Natural killer cell (primary cell): ENCODE measurements at regions of chr15 and their contacts with region 1.

Region 1: DNA sequence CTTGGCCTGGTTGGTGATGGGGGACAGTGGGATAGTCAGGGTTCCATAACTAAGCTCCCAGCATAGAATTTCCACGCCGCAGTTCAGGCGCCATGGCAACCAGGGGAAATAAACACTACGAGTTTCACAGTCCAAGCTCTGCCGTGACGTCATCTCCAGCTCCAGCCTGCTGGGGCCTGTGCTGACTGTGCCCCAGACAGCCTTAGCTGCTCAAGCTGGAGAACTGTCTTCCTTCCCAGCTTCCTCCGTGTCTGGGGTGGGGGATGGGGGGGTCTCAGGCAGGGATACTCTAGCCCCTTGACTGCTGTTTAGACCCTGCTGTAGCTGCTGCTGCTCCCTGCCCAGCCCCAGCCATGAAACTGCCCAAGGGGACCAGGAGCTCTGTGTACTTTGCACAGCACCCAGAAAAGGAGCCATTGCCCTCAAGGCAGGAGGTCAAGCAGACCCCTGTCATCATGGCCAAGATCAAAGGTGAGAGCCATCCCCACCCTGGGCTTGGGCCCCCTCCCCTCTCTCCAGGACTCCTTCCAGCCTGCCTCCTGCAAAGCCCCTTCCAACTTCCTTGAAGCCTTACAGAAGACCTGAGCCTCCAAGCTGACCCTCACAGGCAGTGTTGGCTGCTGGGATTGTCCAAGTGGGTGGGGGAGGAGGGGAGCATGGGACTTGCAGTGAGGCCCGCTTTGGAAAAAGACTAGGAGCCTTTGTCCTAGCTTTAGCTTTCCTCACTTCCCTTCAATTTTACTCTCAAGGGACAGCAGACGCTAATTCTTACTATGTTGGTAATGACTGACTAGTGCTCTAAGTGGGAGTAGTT is 11.4 kb upstream of the CSPG4 start:
- DNase-seq: peak in 1 of 2 donors; percentile 59
- ATAC-seq: peak; percentile 33 to 52 (median 41)
- H3K4me3 ChIP-seq: no peak overlapping the region
- H3K4me3 Mint-ChIP-seq: no peak overlapping the region
- H3K27ac ChIP-seq: no peak overlapping the region
- H3K27ac Mint-ChIP-seq: no peak overlapping the region
- H3K4me1 ChIP-seq: peaks cover 4% of the 10 kb centered on the region
- H3K4me1 Mint-ChIP-seq: peaks cover 6 to 19% of the 10 kb centered on the region in 2 donors
- H3K27me3 ChIP-seq: no peaks in the 10 kb centered on the region
- H3K27me3 Mint-ChIP-seq: peaks cover 9 to 30% of the 10 kb centered on the region in 2 donors
- CTCF ChIP-seq: no peak

Region 2: DNA sequence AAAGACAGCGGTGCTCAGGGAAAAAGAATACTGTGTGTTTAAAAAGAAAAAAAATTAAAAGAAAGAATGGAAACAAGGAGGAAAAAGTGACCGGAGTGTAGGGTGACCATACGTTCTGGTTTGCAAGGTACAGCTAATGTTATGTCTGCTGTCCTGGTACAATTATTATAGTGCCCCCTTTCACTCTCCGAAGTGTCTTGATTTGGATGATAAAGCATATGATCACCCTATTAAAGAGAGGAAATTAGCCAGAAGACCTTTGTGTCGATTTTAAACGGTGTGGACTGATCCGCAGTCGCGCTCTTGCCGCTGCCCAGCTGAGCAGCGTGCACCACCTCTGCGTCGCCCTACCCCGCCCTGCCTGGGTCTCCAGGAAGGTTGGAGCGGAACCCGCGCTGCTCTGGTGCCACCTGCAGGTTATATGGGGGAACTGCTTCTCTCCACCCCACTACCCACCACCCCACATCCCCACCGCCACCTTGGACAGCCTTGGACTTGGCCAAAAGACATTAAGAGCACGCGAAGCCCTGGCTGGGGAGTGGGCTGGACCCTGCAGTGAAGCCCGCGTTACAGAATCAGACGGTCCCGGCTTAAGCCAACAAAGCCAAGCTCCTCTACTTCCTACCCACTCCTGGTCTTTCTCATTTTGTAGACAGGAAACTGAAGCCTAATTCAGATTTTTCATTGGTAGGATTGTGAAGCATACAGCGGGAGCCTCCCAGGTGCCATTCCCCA is 78.0 kb after region 1 on chr15:
- intact Hi-C with region 1: loop called (anchors 1 kb)
- DNase-seq: peak; percentile 73 to 88
- ATAC-seq: peak; percentile 99 to 100 (median 100)
- H3K4me3 ChIP-seq: no peak overlapping the region
- H3K4me3 Mint-ChIP-seq: no peak overlapping the region
- H3K27ac ChIP-seq: no peak overlapping the region
- H3K27ac Mint-ChIP-seq: no peak overlapping the region
- H3K4me1 ChIP-seq: peaks cover 7% of the 10 kb centered on the region
- H3K4me1 Mint-ChIP-seq: peaks cover 9 to 11% of the 10 kb centered on the region in 2 donors
- H3K27me3 ChIP-seq: peaks cover 12% of the 10 kb centered on the region
- H3K27me3 Mint-ChIP-seq: peaks cover 51 to 54% of the 10 kb centered on the region in 2 donors
- CTCF ChIP-seq: peak; percentile 81

Region 3: GRCh38 chr15:75921729-75922703 is 198.0 kb after region 1 on chr15:
- intact Hi-C with region 1: loop called (anchors 10 kb)
- DNase-seq: peak in 1 of 2 donors; percentile 61
- ATAC-seq: peak in 2 of 3 donors; percentile 35 to 37
- H3K4me3 ChIP-seq: no peak overlapping the region
- H3K4me3 Mint-ChIP-seq: peak overlapping the region; percentile 1
- H3K27ac ChIP-seq: no peak overlapping the region
- H3K27ac Mint-ChIP-seq: peak overlapping the region; percentile 30 to 82
- H3K4me1 ChIP-seq: peaks cover 16% of the 10 kb centered on the region
- H3K4me1 Mint-ChIP-seq: peaks cover 43 to 45% of the 10 kb centered on the region in 2 donors
- H3K27me3 ChIP-seq: no peaks in the 10 kb centered on the region
- H3K27me3 Mint-ChIP-seq: no peaks in the 10 kb centered on the region
- CTCF ChIP-seq: no peak

Region 4: GRCh38 chr15:76139368-76140073 is 415.5 kb after region 1 on chr15:
- intact Hi-C with region 1: loop called (anchors 1 kb)
- DNase-seq: peak; percentile 60 to 79
- ATAC-seq: peak; percentile 84 to 98 (median 94)
- H3K4me3 ChIP-seq: no peak overlapping the region
- H3K4me3 Mint-ChIP-seq: no peak overlapping the region
- H3K27ac ChIP-seq: no peak overlapping the region
- H3K27ac Mint-ChIP-seq: no peak overlapping the region
- H3K4me1 ChIP-seq: no peaks in the 10 kb centered on the region
- H3K4me1 Mint-ChIP-seq: no peaks in the 10 kb centered on the region
- H3K27me3 ChIP-seq: no peaks in the 10 kb centered on the region
- H3K27me3 Mint-ChIP-seq: peaks cover 15 to 28% of the 10 kb centered on the region in 2 donors
- CTCF ChIP-seq: peak; percentile 82

Region 5: GRCh38 chr15:76150971-76151598 is 427.0 kb after region 1 on chr15:
- intact Hi-C with region 1: loop called (anchors 5 kb)
- DNase-seq: peak; percentile 69 to 85
- ATAC-seq: peak; percentile 87 to 97 (median 95)
- H3K4me3 ChIP-seq: no peak overlapping the region
- H3K4me3 Mint-ChIP-seq: no peak overlapping the region
- H3K27ac ChIP-seq: no peak overlapping the region
- H3K27ac Mint-ChIP-seq: peak overlapping the region in 1 of 2 donors; percentile 36
- H3K4me1 ChIP-seq: peaks cover 13% of the 10 kb centered on the region
- H3K4me1 Mint-ChIP-seq: peaks cover 10 to 19% of the 10 kb centered on the region in 2 donors
- H3K27me3 ChIP-seq: peaks cover 7% of the 10 kb centered on the region
- H3K27me3 Mint-ChIP-seq: peaks cover 9 to 10% of the 10 kb centered on the region in 2 donors
- CTCF ChIP-seq: peak; percentile 90